Right cardiac atrium (tissue), 5 donors: ENCODE measurements at regions of chr1 and their contacts with region 1.

Region 1: DNA sequence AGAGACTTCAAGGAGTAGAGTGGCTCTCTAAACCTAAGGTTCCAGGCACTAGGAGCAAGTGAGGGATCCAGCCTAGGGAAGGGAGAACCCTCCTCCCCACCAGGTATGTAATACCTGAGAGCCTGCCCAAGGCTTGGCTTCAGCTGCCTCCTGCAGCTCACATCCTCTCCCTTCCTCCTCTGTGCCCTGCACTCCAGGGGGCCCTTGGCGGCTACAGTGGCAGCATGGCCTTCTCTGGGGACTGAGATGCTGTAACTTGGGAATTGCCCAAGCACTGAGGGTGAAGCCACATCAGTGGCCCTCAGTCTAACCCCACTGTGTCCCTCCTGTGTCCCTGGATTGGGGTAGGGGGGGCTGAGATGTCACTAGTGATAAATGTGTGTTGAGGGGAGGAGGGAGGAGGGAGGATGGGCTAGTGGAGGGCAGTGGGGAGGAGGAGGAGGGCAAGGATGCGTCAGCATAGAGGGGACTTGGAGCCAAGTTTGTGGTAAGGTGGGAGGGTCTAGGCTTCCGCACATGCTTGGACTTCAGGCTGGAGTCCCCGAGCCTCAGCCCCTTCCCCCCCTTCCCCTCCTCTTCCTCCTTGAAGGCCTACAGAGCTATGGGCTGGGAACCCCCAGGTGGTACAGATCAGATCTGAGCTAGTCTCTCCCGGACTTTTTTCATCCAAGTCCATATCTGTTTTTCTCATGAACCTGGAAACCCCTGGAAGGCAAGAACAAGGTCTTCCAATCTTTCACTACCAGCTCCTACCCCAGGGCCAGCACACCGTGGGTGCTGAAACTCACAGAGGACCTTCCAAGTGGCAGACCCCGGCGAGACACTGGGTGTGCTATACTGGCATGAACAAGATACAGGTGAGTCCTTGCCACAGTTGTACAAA is 17.5 kb downstream of the COL9A2 start:
- DNase-seq: no peak
- ATAC-seq: no peak
- H3K4me3 ChIP-seq: no peak overlapping the region
- H3K27ac ChIP-seq: no peak overlapping the region
- H3K4me1 ChIP-seq: no peaks in the 10 kb centered on the region
- H3K27me3 ChIP-seq: no peaks in the 10 kb centered on the region

Region 2: DNA sequence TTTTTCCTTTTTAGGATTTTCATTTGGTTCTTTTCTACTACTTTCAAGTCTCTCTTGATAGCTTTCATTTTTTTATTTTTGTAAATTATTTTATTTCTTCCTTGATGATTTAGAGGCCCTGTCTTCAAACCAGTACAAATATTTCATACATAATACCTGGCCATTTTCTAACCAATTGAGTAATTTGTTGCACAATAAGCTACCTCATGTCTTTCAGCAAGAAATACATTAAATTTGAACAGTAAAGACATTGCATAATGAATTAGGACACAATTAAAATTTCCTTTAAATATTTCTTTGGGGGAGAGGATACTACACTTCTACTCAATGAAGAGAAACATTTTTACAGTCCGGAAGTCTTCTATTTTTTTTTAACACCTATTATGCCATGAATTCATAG is 33.1 kb after region 1 on chr1:
- intact Hi-C with region 1: loop called in 1 of 4 experiments (anchors 2 kb)
- DNase-seq: no peak
- ATAC-seq: no peak
- H3K4me3 ChIP-seq: no peak overlapping the region
- H3K27ac ChIP-seq: no peak overlapping the region
- H3K4me1 ChIP-seq: no peaks in the 10 kb centered on the region
- H3K27me3 ChIP-seq: no peaks in the 10 kb centered on the region